ENCODE measurements at regions of chr20 and their contacts with region 1.

Region 1: DNA sequence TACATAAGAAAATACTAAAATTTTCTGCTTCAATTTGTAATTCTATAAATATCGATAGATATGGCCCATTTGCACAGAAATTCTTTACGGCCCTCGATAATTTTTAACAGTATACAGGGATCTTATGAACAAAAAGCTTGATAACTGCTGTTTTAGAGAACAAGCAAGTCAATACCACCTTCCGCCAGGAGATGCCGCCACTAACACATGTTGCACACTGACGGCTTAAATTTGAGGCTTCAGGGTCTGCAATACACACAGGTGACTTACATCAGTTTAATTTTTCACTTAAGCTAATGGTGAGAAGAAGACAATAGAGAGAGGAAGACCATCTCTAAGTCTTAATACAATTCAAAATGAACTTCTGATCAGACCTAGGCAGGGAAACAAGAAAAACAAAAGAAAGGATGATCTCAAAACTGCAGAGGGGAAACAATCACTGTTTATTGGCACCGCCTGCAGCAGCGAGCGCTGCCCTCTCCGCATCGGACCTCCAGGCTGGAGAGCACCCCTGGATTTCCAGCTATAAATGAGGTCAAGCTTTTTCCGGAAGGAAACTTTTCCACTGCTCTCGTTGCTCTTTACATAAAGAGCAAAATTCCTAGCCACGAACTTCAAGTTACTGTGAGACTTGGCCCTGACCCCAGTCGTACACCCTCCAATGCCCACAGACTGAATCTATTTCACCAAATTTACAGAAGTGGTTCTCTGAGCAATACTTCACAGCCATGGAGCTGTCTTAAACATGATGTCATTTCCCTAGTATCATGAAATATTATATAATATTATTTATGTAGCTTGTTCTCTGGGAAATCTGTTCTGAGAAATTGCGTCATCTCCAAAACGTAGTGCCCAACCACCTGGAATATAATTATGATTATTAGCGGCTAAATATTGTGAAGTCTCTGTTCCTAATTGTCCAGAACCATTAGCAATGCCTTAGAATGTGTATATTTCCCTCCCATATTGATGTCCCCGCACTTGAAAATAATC is 54.1 kb downstream of the OTOR start:
- DNase-seq: peak; percentile 16
- H3K4me3 ChIP-seq: no peak overlapping the region
- H3K27ac ChIP-seq: no peak overlapping the region
- H3K27me3 ChIP-seq: peaks cover 7% of the 10 kb centered on the region
- CTCF ChIP-seq: peak; percentile 95

Region 2: GRCh38 chr20:16639027-16639941 is 162.9 kb before region 1 on chr20:
- CTCF ChIA-PET with region 1: no interaction called
- POLR2A ChIA-PET with region 1: no interaction called
- DNase-seq: no peak
- H3K4me3 ChIP-seq: no peak overlapping the region
- H3K27ac ChIP-seq: no peak overlapping the region
- H3K27me3 ChIP-seq: peaks cover 5% of the 10 kb centered on the region
- CTCF ChIP-seq: no peak

Region 3: GRCh38 chr20:16821211-16822089 is 19.2 kb after region 1 on chr20:
- CTCF ChIA-PET with region 1: interaction called, 140 read pairs
- POLR2A ChIA-PET with region 1: no interaction called
- DNase-seq: no peak
- H3K4me3 ChIP-seq: no peak overlapping the region
- H3K27ac ChIP-seq: no peak overlapping the region
- H3K27me3 ChIP-seq: peaks cover 3% of the 10 kb centered on the region
- CTCF ChIP-seq: peak; percentile 94

Region 4: GRCh38 chr20:17225851-17226409 is 423.7 kb after region 1 on chr20:
- CTCF ChIA-PET with region 1: interaction called, 12 read pairs
- POLR2A ChIA-PET with region 1: interaction called, 3 read pairs
- DNase-seq: no peak
- H3K4me3 ChIP-seq: peak overlapping the region; percentile 41
- H3K27ac ChIP-seq: no peak overlapping the region
- H3K27me3 ChIP-seq: peaks cover 20% of the 10 kb centered on the region
- CTCF ChIP-seq: no peak

Region 5: GRCh38 chr20:17281478-17281877 is 479.3 kb after region 1 on chr20:
- CTCF ChIA-PET with region 1: interaction called, 15 read pairs
- POLR2A ChIA-PET with region 1: no interaction called
- DNase-seq: no peak
- H3K4me3 ChIP-seq: no peak overlapping the region
- H3K27ac ChIP-seq: no peak overlapping the region
- H3K27me3 ChIP-seq: no peaks in the 10 kb centered on the region
- CTCF ChIP-seq: peak; percentile 49

Region 6: DNA sequence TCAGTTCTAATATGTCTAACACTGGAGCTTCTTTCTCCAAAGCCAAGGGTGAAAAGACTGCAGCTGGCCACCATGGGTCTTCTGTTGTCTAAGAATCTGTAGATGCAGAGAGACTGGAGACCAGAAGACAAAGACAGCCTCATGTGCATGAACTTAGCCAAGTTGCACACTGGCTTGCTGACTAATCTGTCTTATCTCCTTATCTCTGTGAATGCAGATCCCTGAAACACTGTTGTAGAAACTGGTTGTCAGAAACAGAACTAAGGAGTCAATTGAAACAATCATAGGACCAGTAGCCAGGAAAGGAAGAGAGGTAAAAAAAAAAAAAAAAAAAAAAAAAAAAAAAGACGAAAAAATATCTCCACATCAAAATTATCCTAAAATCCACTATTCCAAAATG is 619.3 kb after region 1 on chr20:
- CTCF ChIA-PET with region 1: interaction called, 443 read pairs
- POLR2A ChIA-PET with region 1: no interaction called
- DNase-seq: no peak
- H3K4me3 ChIP-seq: no peak overlapping the region
- H3K27ac ChIP-seq: no peak overlapping the region
- H3K27me3 ChIP-seq: no peaks in the 10 kb centered on the region
- CTCF ChIP-seq: no peak

Region 7: DNA sequence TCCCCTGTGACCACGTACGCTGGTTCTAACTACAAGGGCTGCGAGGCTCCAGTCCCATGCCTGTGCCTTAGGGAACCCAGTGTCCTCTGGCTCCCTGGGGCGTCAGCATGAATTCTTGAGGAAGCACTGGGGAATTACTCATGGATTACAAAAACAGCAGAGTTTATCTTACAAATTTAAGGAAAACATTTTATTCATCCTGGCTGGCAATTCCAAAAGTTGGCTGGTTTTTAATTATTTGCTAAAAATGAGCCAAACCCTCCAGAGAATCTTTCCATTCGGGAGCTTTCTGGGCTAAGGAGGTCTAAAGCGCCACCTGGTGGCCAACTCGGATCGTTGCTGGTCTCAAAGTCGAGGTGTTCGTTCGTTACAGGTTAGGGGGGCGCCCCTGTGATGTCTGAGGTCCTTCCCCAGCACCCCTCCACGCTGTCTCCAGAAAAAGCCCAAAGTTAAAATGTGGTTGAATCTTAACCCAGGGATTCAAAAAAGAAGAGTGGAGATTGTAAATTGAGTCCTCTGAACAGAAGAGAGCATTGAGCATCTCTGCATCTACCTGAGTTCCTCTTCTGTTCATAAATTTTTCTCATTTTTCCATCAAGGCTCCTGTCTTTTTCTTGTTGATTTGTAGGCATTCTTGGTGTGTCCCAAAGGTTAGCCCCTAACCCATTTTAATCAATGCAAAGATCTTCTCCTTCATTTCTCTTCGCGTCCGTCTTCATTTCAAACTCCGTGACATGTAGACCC is 629.6 kb after region 1 on chr20:
- CTCF ChIA-PET with region 1: interaction called, 443 read pairs
- POLR2A ChIA-PET with region 1: no interaction called
- DNase-seq: peak; percentile 20
- H3K4me3 ChIP-seq: no peak overlapping the region
- H3K27ac ChIP-seq: no peak overlapping the region
- H3K27me3 ChIP-seq: no peaks in the 10 kb centered on the region
- CTCF ChIP-seq: peak; percentile 87

Region 8: DNA sequence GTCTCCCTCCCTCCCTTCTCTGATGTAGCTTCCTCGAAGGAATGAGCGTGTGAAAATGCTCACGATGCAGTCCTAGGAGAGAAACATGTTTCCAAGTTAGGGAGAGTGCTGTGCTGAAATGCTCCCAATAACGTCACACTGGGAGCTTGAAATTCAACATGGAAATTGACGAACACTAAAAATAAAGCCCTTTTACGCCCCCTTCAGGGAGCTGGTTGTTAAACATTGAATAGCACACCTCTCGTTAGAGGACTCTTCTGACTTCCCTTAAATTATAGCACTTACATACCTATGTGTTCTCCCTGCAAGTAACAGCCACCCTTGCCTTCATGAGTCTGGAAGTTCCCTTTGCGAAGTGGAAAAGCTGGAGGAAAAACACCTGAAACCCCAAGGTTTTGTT is 640.4 kb after region 1 on chr20:
- CTCF ChIA-PET with region 1: interaction called, 11 read pairs
- POLR2A ChIA-PET with region 1: no interaction called
- DNase-seq: no peak
- H3K4me3 ChIP-seq: no peak overlapping the region
- H3K27ac ChIP-seq: no peak overlapping the region
- H3K27me3 ChIP-seq: peaks cover 14% of the 10 kb centered on the region
- CTCF ChIP-seq: no peak

Measured in AG04450 (cell line).